ENCODE measurements at regions of chr14 and their contacts with region 1.

Region 1: GRCh38 chr14:99793213-99794150 is at the start of gene EML1:
- DNase-seq: peak; percentile 64 to 91 (median 83)
- H3K4me3 ChIP-seq: peak within 1 kb of the TSS; percentile 47 to 78 (median 68)
- H3K27ac ChIP-seq: peak within 1 kb of the TSS; percentile 58 to 95 (median 89)
- H3K27me3 ChIP-seq: no peaks in the 10 kb centered on the region
- CTCF ChIP-seq: peak in 1 of 56 donors; percentile 20
- total RNA-seq, gene EML1: 24.3 to 74.2 (median 42.9) TPM

Region 2: DNA sequence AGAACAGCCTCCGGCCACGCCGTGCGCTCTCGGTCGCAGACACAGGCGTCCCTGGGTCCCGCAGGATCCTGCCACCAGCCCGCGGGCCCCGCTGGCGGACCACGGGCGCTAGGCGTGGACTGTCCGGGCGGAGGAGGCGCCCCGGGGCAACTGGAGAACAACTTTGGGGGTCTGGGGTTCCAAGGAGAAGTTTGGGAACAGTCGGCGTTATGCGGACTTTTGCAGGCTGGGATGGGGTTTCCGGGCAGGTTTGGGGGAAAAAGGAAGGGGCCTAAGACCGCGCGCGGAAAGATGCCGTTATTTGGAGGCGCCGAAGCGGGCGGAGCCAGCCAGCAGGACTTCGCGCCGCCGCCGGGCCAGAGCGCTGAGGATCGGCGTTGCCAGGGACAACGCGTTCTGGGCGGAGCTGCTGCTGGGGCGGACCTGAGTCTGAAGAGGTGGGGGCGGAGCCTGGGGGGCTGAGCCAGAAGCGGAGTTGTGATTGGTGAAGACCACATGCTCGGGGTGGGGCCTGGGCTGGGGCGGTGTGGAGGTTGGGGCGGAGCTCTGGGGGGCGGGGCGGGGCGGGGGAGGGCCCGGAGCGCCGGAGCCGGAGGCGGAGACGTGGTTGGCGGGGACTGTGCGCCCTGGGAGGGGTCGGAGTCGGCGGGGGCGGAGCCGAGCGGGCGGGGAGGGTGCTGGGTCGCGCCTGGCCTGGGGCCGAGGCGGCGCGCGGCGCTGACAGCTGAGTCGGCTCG is 109.7 kb before region 1 on chr14 and contains the start of gene CYP46A1:
- intact Hi-C with region 1: loop called (anchors 2 to 5 kb)
- DNase-seq: peak; percentile 99 to 100 (median 100)
- H3K4me3 ChIP-seq: peak within 1 kb of the TSS; percentile 74 to 97 (median 91)
- H3K27ac ChIP-seq: peak within 1 kb of the TSS in 55 of 59 donors; percentile 13 to 92 (median 81)
- H3K27me3 ChIP-seq: no peaks in the 10 kb centered on the region
- CTCF ChIP-seq: peak in 22 of 56 donors; percentile 1 to 30 (median 16)
- total RNA-seq, gene CYP46A1: 26.0 to 165 (median 81.5) TPM

Region 3: DNA sequence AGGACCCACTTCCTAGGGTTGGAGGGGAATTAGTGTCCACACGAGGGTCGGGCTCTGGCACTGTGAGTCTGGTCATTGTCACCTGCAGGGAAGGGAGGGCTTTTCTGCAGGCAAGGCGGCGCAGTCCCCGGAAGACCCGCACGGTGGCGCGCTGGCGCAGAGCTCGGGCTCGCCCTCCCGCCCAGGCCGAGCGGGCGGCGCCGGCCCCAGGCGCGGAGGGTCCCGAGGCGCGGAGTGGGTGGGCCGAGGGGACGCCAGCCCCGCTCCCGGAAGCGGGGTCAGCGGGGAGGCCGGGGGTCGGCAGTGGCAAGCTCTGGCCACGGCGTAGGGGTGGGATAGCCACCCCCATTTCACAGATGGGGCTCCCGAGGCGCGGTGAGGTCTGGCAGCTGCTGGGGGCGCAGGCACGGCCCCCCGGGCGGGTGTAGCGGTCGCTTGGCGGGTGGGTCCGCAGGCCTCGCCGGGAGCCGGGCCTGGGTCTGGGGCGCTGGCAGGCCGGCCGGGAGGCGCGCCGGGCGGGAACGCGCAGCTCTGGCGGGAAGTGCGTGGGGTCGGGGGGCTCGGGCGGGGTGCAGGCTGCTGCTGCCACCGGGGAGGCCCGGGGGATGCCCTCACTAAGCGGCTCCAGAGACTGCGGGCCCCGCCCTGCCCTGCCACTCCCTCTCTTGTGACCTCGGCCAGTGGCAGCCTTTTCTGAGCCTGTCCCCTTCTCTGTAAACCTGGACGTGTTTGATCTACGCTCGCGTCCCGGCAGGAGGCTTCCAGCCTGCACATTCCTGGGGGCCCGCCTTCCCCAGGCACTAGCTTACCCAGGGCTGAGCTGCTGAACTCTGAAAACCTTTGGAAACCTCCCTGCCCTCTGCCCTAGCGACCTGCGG is 63.3 kb before region 1 on chr14:
- intact Hi-C with region 1: loop called (anchors 2 kb)
- DNase-seq: peak; percentile 51 to 82 (median 70)
- H3K4me3 ChIP-seq: peak overlapping the region; percentile 34 to 84 (median 67)
- H3K27ac ChIP-seq: peak overlapping the region in 20 of 59 donors; percentile 1 to 88 (median 42)
- H3K27me3 ChIP-seq: no peaks in the 10 kb centered on the region
- CTCF ChIP-seq: peak; percentile 54 to 99 (median 90)

Region 4: DNA sequence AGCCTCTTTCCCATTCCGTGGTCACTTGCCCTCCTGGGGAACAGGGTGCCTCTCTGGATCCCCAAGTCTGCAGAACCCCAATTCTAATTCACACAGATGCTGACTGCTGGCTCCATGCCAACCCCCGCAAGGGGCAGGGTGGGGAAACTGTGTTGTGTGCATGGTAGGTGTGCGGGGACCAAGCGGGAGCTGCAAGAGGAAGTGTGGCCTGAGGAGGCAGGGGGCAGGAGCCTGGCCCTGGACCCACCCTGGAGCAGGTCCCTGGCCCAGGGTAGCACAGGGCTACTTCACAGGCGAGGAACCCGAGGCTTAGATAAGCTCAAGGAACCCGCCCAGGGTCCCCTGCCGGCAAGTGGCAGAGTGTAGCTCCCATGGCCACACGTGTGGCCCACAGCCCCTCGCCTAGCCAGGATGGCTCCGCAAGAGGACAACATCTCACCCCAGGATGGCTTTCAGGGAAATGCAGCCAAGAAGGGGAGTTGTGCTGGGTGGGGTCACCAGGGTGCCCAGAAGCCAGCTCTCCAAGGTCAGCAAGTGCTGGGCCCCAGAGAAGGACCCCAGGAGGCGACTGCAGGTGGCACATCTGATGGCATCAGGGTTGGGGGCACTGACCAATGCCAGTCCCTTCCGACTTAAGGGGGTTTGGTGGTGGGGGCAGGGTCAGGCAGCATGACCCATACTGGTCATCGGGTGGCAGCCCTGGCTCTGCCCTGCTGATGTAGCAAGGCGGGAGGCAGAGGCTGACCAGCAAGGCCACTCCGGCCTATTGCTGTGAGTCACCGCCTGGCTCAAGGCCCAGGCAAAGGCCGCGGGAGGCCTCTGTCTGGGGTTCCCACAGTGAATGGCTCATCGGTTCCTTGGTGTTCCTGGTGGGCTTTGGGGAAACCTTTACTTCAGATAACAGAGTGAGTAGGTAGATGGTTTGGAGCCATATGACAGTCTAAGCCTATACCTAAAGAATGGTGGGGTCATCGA is 37.6 kb before region 1 on chr14:
- intact Hi-C with region 1: loop called in 1 of 2 experiments (anchors 2 kb)
- DNase-seq: peak in 9 of 10 donors; percentile 81 to 91 (median 85)
- H3K4me3 ChIP-seq: no peak overlapping the region
- H3K27ac ChIP-seq: peak overlapping the region in 12 of 59 donors; percentile 16 to 61 (median 34)
- H3K27me3 ChIP-seq: no peaks in the 10 kb centered on the region
- CTCF ChIP-seq: peak in 20 of 56 donors; percentile 4 to 62 (median 30)

Region 5: DNA sequence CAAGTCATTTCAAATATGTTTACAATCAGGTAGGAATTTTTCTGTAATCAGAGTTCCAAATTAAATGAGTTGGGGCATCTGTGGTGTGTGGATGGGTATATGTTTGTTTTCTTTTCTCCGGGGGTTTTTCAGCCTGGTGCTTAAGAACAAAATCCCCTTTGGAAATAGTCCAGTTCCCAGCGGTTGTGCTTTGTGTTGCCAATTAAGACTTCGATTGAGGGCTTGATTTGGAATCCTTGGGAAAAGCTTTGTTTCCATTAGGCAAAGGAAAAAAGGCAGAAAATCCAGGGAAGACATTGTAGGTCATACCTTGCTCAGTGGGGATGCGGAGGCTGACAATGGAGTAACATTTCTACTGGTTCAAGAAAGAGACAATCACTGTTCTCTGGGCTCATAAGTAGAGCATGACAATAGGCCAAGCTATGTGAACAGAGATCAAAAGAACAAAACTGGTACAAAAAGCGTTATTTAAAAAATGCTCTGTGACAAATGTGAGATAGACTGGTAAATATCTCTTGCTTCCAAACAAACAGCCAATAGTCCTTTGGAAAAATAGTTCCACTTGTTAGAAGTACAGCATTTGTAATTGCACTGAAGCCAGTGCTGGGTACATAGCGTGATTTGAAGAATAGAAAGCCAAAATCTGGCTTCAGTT is 79.4 kb after region 1 on chr14:
- intact Hi-C with region 1: loop called in 1 of 2 experiments (anchors 5 kb)
- DNase-seq: no peak
- H3K4me3 ChIP-seq: peak overlapping the region in 11 of 59 donors; percentile 9 to 35 (median 16)
- H3K27ac ChIP-seq: peak overlapping the region; percentile 15 to 96 (median 81)
- H3K27me3 ChIP-seq: no peaks in the 10 kb centered on the region
- CTCF ChIP-seq: no peak

Region 6: DNA sequence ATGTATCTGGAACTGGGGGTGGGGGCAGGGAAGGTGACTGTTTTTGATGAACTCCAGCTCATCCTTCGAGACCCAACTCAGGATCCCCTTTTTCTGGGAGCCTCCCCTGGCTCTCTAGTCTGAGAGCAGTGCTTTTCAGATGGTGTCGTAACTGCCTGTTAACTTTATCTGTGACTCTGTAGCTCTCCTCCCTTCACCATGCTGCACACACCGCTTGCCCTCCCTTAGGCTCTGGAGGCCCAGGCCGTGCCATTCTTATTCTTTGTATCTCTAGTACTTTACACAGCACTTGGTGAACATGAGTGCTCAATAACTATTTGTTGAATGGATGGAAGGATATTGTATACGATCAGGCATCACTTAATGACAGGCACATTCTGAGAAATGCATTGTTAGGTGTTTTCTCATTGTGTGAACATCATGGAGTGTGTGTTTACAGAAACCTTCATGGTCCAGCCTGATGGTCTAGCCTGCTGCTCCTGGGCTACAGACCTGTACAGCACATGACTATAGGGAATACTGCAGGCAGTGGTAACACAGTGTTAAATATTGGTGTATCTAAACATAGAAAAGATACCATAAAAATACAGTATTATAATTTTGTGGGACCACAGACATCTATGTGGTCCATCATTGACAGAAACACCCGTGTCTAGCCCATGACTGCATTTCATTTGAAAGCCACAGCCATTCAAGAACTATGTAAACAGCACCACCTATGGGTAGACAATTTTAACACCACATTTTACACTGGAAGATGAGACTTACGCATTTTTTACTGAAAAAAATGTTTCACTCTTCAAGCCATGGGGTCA is 91.6 kb after region 1 on chr14:
- intact Hi-C with region 1: loop called in 1 of 2 experiments (anchors 5 kb)
- DNase-seq: peak in 2 of 10 donors; percentile 27 to 48
- H3K4me3 ChIP-seq: no peak overlapping the region
- H3K27ac ChIP-seq: peak overlapping the region in 5 of 59 donors; percentile 10 to 62 (median 21)
- H3K27me3 ChIP-seq: no peaks in the 10 kb centered on the region
- CTCF ChIP-seq: peak; percentile 74 to 98 (median 88)

Region 7: DNA sequence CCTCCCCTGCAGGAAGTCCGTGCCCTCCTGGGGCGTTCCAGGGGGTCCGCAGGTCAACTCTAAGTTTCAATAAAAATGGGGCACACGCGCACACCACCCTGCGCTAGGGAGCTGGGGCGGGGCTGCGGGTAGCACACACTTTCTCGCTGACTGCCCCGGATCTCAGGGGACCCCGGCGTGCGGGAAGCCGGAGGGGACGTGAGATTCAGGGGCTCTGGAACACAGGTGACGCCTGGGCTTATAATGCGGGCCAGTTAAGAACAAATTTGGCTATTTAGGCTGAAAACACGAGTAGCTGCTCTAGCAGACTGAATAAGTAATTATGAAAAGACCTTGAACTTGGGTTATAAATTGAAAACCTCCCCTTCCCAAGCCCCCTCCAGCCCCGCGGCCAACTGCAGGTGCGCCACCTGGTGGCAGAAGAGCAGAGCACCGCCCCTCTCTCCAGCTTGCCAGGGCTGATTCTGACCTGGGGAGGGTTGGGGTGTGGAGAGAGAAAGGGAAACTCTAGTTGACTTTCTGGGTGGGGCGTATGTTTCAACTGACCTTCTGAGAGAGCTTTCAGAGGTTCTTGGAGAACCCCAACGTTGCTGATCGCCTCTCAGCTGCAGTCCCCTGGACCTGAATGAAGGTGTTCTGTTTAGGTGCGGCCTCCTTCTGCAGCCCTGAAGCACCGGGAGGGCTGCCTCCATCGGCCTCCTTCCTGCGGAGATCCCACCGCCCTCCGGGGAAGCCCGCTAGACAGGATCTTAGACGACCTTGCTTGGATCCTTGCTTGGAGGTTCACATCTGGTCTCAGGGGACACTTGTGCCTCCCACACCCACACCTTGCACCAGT is 153.4 kb after region 1 on chr14:
- intact Hi-C with region 1: no loop called
- DNase-seq: peak in 1 of 10 donors; percentile 15
- H3K4me3 ChIP-seq: peak overlapping the region in 45 of 59 donors; percentile 1 to 60 (median 29)
- H3K27ac ChIP-seq: peak overlapping the region in 24 of 59 donors; percentile 0 to 64 (median 47)
- H3K27me3 ChIP-seq: peaks cover 0 to 5% (median 0%) of the 10 kb centered on the region in 45 donors
- CTCF ChIP-seq: peak; percentile 59 to 94 (median 85)

Measured in dorsolateral prefrontal cortex (tissue), 120 donors.